Dendritic cell treated with granulocyte-macrophage colony-stimulating factor and Interleukin-4, amounts not matched to agents 40 ng/mL and 50 ng/mL, for 4 days (primary cell): ENCODE measurements at regions of chr17 and their contacts with region 1.

Region 1: DNA sequence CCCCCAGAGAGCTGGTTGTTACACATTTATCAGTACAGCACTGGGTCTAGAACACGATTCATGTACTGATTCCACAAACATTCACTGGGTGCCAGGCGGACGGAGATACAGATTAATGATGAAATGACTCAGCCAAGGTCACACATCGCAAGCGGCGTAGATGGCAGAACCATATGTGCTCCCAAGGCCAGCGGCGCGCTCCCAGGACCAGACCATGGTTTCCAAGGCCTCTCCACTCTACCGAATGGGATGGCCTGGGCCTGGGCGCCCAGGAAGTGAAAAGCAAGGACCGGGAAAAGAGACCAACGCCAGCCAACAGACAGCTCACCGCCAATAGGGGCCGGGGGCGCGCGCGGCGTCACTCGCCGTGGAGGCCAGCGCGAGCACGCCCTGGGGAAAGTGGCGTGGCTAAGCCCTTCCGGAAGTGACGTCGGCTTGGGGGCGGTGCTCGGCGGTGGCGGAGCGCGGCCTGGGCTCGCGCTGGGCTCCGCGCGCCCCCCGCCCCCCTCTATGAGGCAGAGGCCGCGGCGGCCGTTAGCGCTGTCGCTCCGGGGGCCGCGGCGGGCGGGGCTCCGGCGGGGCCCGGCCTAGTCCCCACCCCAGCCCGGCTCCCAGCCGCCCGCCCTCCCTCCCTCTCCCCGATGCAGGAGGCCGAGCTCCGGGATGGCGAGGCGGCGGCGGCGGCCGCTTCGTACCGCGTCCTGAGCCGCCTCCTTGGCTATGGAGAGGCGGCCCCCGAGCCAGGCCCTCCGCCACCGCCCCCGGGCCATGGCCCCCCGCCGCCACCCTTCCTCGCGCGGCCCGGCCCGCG is at the start of gene SOCS7:
- H3K4me3 Mint-ChIP-seq: peak within 1 kb of the TSS; percentile 82
- H3K27ac Mint-ChIP-seq: peak within 1 kb of the TSS; percentile 93
- H3K4me1 Mint-ChIP-seq: peaks cover 55% of the 10 kb centered on the region
- H3K27me3 Mint-ChIP-seq: no peaks in the 10 kb centered on the region

Region 2: DNA sequence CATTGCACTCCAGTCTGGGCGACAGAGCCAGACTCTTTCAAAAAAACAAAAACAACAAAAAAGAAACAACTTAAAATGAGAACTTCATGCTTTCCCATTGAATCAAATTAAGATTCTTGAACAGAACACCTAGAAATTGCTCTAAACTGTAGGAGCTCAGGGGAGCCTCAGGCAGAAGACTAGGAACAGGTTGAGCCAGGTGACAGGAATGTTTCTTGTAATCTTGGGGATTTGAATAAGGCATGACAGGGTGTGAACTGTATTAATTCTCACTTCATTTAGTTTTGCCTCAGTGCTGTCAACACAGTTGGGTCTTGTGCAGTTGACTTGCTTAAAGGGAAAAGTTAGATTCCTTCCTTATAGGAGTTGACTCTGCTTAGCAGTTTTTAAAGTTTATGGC is 27.8 kb after region 1 on chr17:
- intact Hi-C with region 1: no loop called
- H3K4me3 Mint-ChIP-seq: no peak overlapping the region
- H3K27ac Mint-ChIP-seq: no peak overlapping the region
- H3K4me1 Mint-ChIP-seq: peaks cover 5% of the 10 kb centered on the region
- H3K27me3 Mint-ChIP-seq: no peaks in the 10 kb centered on the region

Region 3: GRCh38 chr17:38415250-38416194 is 63.9 kb after region 1 on chr17:
- intact Hi-C with region 1: loop called (anchors 1 kb)
- H3K4me3 Mint-ChIP-seq: no peak overlapping the region
- H3K27ac Mint-ChIP-seq: no peak overlapping the region
- H3K4me1 Mint-ChIP-seq: peaks cover 30% of the 10 kb centered on the region
- H3K27me3 Mint-ChIP-seq: peaks cover 43% of the 10 kb centered on the region

Region 4: GRCh38 chr17:38485146-38485468 is 133.5 kb after region 1 on chr17:
- intact Hi-C with region 1: loop called (anchors 2 kb)
- H3K4me3 Mint-ChIP-seq: no peak overlapping the region
- H3K27ac Mint-ChIP-seq: no peak overlapping the region
- H3K4me1 Mint-ChIP-seq: peaks cover 10% of the 10 kb centered on the region
- H3K27me3 Mint-ChIP-seq: peaks cover 2% of the 10 kb centered on the region

Region 5: DNA sequence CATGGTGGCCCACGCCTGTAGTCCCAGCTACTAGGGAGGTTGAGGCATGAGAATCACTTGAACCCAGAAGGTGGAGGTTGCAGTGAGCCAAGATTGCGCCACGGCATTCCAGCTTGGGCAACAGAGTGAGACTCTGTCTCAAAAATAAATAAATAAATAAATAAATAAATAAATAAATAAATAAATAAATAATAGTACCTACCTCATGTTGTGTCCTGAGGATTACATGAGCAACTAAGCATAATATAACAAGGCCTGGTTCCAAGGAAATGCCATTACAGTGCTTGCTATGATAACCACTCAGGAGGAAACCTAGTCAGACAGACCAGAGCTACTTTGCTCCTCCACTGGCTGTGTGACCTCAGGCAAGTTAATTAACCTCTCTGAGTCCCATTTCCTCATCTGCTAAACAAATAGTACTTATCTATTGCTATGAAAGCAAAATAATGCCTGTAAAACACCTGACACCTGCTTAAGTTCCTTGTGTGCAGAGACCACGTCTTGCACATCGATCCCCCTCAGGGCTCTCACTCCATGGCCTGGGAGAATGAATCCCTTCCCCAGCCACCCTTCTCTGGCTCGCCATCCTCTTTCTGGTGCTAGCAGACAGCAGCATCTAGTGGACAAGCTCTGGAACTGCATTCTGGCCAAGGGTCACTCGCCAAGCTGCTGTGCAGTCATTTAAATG is 315.6 kb after region 1 on chr17:
- intact Hi-C with region 1: loop called (anchors 10 kb)
- H3K4me3 Mint-ChIP-seq: no peak overlapping the region
- H3K27ac Mint-ChIP-seq: no peak overlapping the region
- H3K4me1 Mint-ChIP-seq: peaks cover 41% of the 10 kb centered on the region
- H3K27me3 Mint-ChIP-seq: peaks cover 77% of the 10 kb centered on the region